ENCODE measurements at regions of chr9 and their contacts with region 1.

Region 1: GRCh38 chr9:35882263-35882848 is 12.2 kb upstream of the OR13J1 start:
- DNase-seq: peak; percentile 87
- ATAC-seq: peak; percentile 88
- H3K4me3 Mint-ChIP-seq: no peak overlapping the region
- H3K27ac Mint-ChIP-seq: no peak overlapping the region
- H3K4me1 Mint-ChIP-seq: no peaks in the 10 kb centered on the region
- H3K27me3 Mint-ChIP-seq: peaks cover 6% of the 10 kb centered on the region
- CTCF ChIP-seq: peak; percentile 87

Region 2: GRCh38 chr9:35716230-35716629 is 166.1 kb before region 1 on chr9:
- CTCF ChIA-PET with region 1: no interaction called
- POLR2A ChIA-PET with region 1: no interaction called
- DNase-seq: no peak
- ATAC-seq: no peak
- H3K4me3 Mint-ChIP-seq: no peak overlapping the region
- H3K27ac Mint-ChIP-seq: no peak overlapping the region; the same call in 1 of the 2 replicates
- H3K4me1 Mint-ChIP-seq: no peaks in the 10 kb centered on the region
- H3K27me3 Mint-ChIP-seq: no peaks in the 10 kb centered on the region
- CTCF ChIP-seq: no peak

Region 3: DNA sequence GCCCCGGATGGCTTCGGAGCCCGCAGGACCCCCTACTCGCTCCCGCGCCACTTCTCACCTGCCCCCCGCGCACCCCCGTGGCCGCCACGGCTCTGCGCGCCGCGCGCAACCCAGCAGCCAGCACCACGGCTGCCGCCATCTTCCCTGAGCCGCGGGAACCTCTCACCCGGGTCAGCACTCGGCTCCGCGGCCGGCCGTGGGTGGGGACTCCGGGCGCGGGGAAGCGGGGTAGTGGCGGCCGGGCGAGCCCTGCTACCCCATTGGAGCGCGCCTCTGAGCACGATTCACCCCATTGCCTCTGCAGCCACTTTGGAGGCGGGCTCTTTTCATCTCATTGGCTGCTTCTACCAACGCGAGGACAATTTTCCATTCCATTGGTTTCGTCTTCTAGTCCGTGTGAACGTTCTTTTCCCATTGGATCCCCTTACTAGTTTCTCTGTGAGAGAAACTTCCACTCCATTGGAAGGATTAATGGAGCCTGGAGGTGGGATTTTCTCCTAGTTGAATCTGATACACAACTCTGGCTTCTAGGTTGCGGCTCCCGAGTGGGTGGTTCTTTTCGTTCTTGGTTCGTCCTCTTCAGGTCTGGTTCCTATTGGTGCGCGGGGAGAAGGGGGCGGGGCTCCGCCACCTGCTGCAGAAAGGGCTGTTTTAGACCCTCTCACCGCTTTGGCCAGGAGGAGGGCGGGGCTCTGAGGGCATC is 67.4 kb before region 1 on chr9 and contains the start of gene HINT2:
- CTCF ChIA-PET with region 1: interaction called, 18 read pairs
- POLR2A ChIA-PET with region 1: no interaction called
- DNase-seq: peak; percentile 99
- ATAC-seq: peak; percentile 80
- H3K4me3 Mint-ChIP-seq: peak within 1 kb of the TSS; percentile 91
- H3K27ac Mint-ChIP-seq: peak within 1 kb of the TSS; percentile 100
- H3K4me1 Mint-ChIP-seq: peaks cover 27% of the 10 kb centered on the region
- H3K27me3 Mint-ChIP-seq: peaks cover 11% of the 10 kb centered on the region
- CTCF ChIP-seq: no peak
- total RNA-seq, gene HINT2: 33.6 to 42.7 TPM (median 42.1 TPM) in 3 replicates

Region 4: GRCh38 chr9:35835216-35835632 is 47.1 kb before region 1 on chr9:
- CTCF ChIA-PET with region 1: interaction called, 72 read pairs
- POLR2A ChIA-PET with region 1: no interaction called
- DNase-seq: peak; percentile 52
- ATAC-seq: peak; percentile 90
- H3K4me3 Mint-ChIP-seq: no peak overlapping the region
- H3K27ac Mint-ChIP-seq: no peak overlapping the region
- H3K4me1 Mint-ChIP-seq: peaks cover 19% of the 10 kb centered on the region
- H3K27me3 Mint-ChIP-seq: peaks cover 21% of the 10 kb centered on the region
- CTCF ChIP-seq: peak; percentile 31; the same call in 1 of the 2 replicates

Region 5: GRCh38 chr9:35859310-35859989 is 22.9 kb before region 1 on chr9:
- CTCF ChIA-PET with region 1: interaction called, 23 read pairs
- POLR2A ChIA-PET with region 1: no interaction called
- DNase-seq: no peak
- ATAC-seq: no peak
- H3K4me3 Mint-ChIP-seq: no peak overlapping the region
- H3K27ac Mint-ChIP-seq: no peak overlapping the region
- H3K4me1 Mint-ChIP-seq: peaks cover 5% of the 10 kb centered on the region
- H3K27me3 Mint-ChIP-seq: peaks cover 23% of the 10 kb centered on the region
- CTCF ChIP-seq: no peak

Region 6: DNA sequence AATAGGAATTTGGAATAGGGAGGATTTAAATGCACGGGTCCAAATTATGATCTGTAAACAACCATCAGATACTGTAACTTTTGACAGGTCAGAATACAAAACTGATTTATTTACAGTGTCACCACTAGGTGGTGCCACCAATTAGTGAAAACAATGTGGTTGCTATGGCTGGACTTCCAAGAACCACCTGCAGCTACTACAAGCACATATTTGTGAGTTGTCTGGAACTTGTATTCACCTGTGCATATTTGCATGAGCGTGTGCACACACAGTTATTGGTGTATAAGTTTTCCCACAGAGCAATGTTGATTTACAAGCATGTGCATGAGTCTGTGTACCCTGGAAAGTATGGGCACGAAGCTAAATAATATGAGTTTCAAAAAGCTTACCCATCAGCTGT is 20.7 kb after region 1 on chr9:
- CTCF ChIA-PET with region 1: interaction called, 52 read pairs
- POLR2A ChIA-PET with region 1: no interaction called
- DNase-seq: no peak
- ATAC-seq: no peak; the same call in 1 of the 2 replicates
- H3K4me3 Mint-ChIP-seq: no peak overlapping the region
- H3K27ac Mint-ChIP-seq: no peak overlapping the region
- H3K4me1 Mint-ChIP-seq: peaks cover 20% of the 10 kb centered on the region
- H3K27me3 Mint-ChIP-seq: peaks cover 5% of the 10 kb centered on the region; the same call in 1 of the 2 replicates
- CTCF ChIP-seq: peak; percentile 68

Region 7: DNA sequence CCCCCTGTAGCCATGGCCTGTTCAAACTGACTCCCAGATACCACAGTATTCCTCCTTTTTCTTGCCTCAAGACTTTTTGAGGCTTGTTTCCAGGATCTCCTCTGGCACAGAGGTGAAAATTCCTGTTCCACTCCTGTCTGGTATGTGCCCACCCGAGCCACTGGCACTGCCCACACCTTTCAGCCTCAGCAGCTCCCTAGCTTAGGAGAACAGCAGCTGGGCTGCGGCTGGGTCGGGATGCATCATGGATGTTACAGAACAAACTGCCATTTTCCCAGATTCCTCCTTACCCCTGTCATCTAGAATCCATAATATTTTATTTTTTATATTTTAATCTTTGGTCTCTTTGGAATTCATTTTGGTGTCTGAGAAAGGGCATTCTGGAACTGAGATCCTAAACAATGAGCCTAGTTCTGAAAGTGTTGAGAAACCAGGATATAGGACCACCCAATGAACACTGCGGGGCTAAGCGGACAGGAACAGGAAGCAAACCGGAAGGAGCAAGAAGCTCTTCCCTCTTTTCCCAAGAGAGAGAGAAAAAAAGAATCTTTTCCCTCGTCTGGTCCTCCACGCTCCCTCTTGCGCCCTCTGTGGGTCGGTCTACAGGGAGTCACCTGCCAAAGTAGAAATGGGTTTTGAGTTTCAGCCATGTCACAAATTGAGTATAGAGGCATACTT is 63.1 kb after region 1 on chr9:
- CTCF ChIA-PET with region 1: interaction called, 17 read pairs
- POLR2A ChIA-PET with region 1: no interaction called
- DNase-seq: peak; percentile 85
- ATAC-seq: peak; percentile 84
- H3K4me3 Mint-ChIP-seq: peak overlapping the region; percentile 57
- H3K27ac Mint-ChIP-seq: no peak overlapping the region; the same call in 1 of the 2 replicates
- H3K4me1 Mint-ChIP-seq: peaks cover 8% of the 10 kb centered on the region; the same call in 1 of the 2 replicates
- H3K27me3 Mint-ChIP-seq: peaks cover 71% of the 10 kb centered on the region
- CTCF ChIP-seq: peak; percentile 56

Measured in WTC11 (cell line).